Panc1 (cell line): ENCODE measurements at regions of chr14 and their contacts with region 1.

Region 1: GRCh38 chr14:91899212-91899611 is 31.9 kb upstream of the TC2N start:
- DNase-seq: no peak
- ATAC-seq: no peak
- H3K4me3 ChIP-seq: no peak overlapping the region
- H3K27ac ChIP-seq: no peak overlapping the region
- H3K4me1 ChIP-seq: no peaks in the 10 kb centered on the region
- H3K27me3 ChIP-seq: no peaks in the 10 kb centered on the region
- CTCF ChIP-seq: no peak

Region 2: GRCh38 chr14:91614187-91614586 is 285.0 kb before region 1 on chr14:
- CTCF ChIA-PET with region 1: no interaction called
- POLR2A ChIA-PET with region 1: interaction called, 12 read pairs
- in situ Hi-C with region 1: no loop called
- intact Hi-C with region 1: no loop called
- DNase-seq: no peak
- ATAC-seq: no peak
- H3K4me3 ChIP-seq: no peak overlapping the region
- H3K27ac ChIP-seq: no peak overlapping the region
- H3K4me1 ChIP-seq: no peaks in the 10 kb centered on the region
- H3K27me3 ChIP-seq: no peaks in the 10 kb centered on the region
- CTCF ChIP-seq: no peak

Region 3: DNA sequence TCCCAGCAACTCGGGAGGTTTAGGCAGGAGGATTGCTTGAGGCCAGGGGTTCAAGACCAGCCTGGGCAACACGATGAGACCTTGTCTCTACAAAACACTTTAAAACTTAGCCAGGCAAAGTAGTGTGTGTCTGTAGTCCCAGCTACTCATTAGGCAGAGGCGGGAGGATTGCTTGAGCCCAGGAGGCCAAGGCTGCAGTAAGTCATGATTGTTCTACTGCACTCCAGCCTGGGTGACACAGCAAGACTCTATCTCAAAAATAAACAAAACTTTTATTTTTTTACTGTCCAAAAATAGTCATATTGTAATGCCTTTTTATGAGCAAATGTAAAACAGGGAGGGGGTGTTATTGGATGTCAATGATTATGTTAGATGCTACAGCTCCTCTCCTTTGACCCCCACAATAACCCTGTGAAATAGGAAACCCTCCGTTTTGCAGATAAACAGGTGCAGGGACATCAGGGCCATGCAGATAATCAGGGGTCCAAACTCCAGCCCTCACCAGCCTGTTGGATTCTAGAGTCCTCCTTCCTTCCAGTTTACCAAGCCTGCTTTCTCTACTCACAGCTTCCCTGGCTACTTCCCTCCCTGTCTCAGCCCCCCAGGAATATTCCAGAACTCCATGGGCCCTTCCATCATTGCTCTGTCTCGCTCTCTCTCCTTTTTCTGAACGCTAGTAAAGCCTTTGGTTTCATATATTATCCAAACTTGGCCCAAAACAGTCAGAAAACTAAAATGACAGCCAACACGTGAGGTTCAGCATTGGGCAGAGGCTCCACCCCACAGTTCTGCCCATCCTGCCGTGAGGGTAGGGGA is 54.2 kb after region 1 on chr14:
- CTCF ChIA-PET with region 1: no interaction called
- POLR2A ChIA-PET with region 1: no interaction called
- in situ Hi-C with region 1: no loop called
- intact Hi-C with region 1: no loop called
- DNase-seq: no peak
- ATAC-seq: no peak
- H3K4me3 ChIP-seq: no peak overlapping the region
- H3K27ac ChIP-seq: no peak overlapping the region
- H3K4me1 ChIP-seq: no peaks in the 10 kb centered on the region
- H3K27me3 ChIP-seq: peaks cover 2% of the 10 kb centered on the region; the same call in 1 of the 2 replicates
- CTCF ChIP-seq: no peak

Region 4: DNA sequence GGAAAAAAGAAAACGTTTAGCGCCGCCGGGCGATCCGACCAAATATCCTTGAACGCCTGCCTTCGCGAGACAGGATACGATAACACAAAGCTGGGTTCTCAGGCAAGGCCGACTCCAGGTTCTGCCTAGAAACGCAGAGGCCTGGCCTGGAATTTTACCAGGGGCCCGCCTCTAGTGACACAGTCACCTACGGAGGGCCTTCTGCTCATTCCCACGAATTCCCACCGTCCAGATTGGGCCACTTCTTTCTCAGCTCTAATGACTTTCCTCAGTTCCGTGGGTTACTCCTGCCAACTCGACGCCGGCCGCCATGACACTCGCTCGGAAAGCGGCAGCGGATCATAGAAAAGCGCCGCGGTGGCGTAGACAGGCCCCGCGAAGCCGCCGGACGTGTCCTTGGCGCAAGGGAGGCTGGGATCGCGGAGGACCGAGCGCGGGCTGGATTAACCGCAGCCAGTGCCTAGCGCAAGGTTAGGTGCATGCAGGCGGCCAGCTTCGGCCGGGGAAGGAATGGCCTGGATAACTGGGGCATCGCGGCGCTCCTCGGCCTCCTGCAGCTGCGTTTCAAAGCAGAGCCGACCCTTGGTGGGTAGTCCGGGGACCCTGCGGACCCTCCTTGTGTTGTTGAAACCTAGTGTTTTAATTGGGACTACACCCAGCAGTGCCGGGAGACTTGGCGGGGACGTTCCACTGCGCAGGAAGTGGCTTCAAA is 140.7 kb after region 1 on chr14 and contains the start of gene TRIP11:
- CTCF ChIA-PET with region 1: no interaction called
- POLR2A ChIA-PET with region 1: interaction called, 13 read pairs
- in situ Hi-C with region 1: no loop called
- intact Hi-C with region 1: no loop called
- DNase-seq: peak; percentile 51
- ATAC-seq: peak; percentile 99
- H3K4me3 ChIP-seq: peak within 1 kb of the TSS; percentile 86 to 87
- H3K27ac ChIP-seq: peak within 1 kb of the TSS; percentile 89
- H3K4me1 ChIP-seq: peaks cover 14% of the 10 kb centered on the region; the same call in 1 of the 2 replicates
- H3K27me3 ChIP-seq: no peaks in the 10 kb centered on the region
- CTCF ChIP-seq: no peak
- total RNA-seq, gene TRIP11: 37.3 TPM

Region 5: GRCh38 chr14:93331002-93331727 is 1432.0 kb after region 1 on chr14:
- CTCF ChIA-PET with region 1: no interaction called
- POLR2A ChIA-PET with region 1: no interaction called
- in situ Hi-C with region 1: no loop called
- intact Hi-C with region 1: no loop called
- DNase-seq: no peak
- ATAC-seq: no peak
- H3K4me3 ChIP-seq: peak overlapping the region; percentile 75 to 77
- H3K27ac ChIP-seq: peak overlapping the region; percentile 7; the same call in 1 of the 2 replicates
- H3K4me1 ChIP-seq: peaks cover 20% of the 10 kb centered on the region
- H3K27me3 ChIP-seq: no peaks in the 10 kb centered on the region
- CTCF ChIP-seq: no peak